CD8-positive, alpha-beta T cell (primary cell): ENCODE measurements at regions of chr1 and their contacts with region 1.

Region 1: DNA sequence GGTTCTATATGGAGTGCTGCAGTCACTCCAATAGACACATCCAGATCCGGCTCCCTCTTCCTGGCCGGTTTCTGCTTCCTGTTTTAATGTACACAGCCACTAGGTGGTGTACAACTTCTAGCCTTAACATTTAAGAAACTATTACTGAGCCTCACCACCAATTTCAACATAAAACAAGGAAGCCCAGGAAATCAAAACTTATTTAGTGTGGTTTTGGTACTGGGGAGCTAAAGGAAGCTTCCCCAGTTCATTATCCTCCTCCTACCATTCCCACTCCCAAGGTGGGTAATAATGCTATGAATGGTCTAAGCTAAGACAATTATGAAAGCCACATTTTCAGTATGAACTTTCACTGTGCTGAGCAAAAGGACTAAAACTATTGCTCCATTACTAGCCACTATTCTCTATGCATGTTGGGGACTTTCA is 25.5 kb upstream of the MTMR11 start:
- DNase-seq: peak in 7 of 9 experiments; percentile 21 to 78 (median 42)
- ATAC-seq: peak; percentile 83
- H3K4me3 ChIP-seq: no peak overlapping the region
- H3K4me3 Mint-ChIP-seq: no peak overlapping the region
- H3K27ac ChIP-seq: no peak overlapping the region
- H3K27ac Mint-ChIP-seq: no peak overlapping the region
- H3K4me1 ChIP-seq: no peaks in the 10 kb centered on the region
- H3K4me1 Mint-ChIP-seq: peaks cover 9% of the 10 kb centered on the region
- H3K27me3 ChIP-seq: no peaks in the 10 kb centered on the region
- H3K27me3 Mint-ChIP-seq: no peaks in the 10 kb centered on the region
- CTCF ChIP-seq: peak; percentile 82

Region 2: DNA sequence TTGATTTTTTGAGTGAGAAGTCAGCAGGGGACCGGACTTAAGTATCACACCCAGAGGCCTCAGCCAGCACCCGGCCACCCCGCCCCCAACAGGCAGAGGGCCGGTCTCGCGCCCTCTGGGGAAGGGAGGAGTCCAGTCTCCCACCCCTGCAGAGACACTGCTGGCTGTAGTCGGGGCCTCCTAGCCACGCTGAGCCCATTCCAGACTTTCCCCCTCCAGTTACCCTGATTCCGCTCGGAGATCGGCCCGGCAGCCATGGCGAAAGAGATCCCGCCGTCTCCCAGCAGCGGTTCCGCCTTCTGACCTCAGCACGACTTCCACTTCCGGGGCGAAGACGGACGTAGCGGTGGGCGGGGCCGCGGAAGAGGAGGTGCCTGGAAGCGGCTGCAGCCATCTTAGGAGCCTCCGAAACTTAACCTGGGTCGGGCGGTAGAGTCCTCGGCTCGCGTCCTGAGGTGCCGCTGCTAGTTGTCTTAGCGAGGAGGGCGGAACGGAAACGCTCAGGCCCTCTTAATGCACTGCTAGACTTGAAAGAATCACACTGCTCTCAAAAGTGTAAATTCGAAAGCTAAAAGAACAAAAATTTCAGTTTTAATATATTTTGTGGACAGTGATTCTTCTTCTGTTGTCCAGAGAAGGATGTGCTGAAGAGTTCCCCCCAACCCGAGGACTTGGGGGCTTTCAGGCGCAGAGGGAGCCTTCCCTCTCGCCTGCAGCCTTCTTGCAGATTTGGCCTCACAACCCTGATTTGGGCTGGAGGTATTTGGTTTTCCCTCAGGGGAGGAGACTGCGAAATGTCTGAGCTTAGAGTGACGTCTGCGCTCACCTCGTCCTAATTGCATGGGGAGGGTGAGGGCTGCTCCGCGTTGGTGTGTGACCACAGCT is 34.4 kb before region 1 on chr1 and contains the start of gene SF3B4:
- CTCF ChIA-PET with region 1: interaction called, 4 read pairs
- POLR2A ChIA-PET with region 1: no interaction called
- intact Hi-C with region 1: loop called in 1 of 2 experiments (anchors 1 kb)
- DNase-seq: peak; percentile 91 to 98 (median 96)
- ATAC-seq: peak; percentile 94
- H3K4me3 ChIP-seq: peak within 1 kb of the TSS; percentile 86 to 97
- H3K4me3 Mint-ChIP-seq: peak within 1 kb of the TSS; percentile 94
- H3K27ac ChIP-seq: peak within 1 kb of the TSS; percentile 71 to 95
- H3K27ac Mint-ChIP-seq: peak within 1 kb of the TSS; percentile 91
- H3K4me1 ChIP-seq: peaks cover 34% of the 10 kb centered on the region
- H3K4me1 Mint-ChIP-seq: peaks cover 45% of the 10 kb centered on the region
- H3K27me3 ChIP-seq: no peaks in the 10 kb centered on the region
- H3K27me3 Mint-ChIP-seq: peaks cover 2% of the 10 kb centered on the region
- CTCF ChIP-seq: no peak
- total RNA-seq, gene SF3B4: 52.0 to 59.1 TPM

Region 3: GRCh38 chr1:149997585-149998262 is 35.6 kb after region 1 on chr1:
- CTCF ChIA-PET with region 1: interaction called, 12 read pairs
- POLR2A ChIA-PET with region 1: no interaction called
- intact Hi-C with region 1: no loop called
- DNase-seq: peak in 1 of 9 experiments; percentile 33
- ATAC-seq: no peak
- H3K4me3 ChIP-seq: no peak overlapping the region
- H3K4me3 Mint-ChIP-seq: no peak overlapping the region
- H3K27ac ChIP-seq: no peak overlapping the region
- H3K27ac Mint-ChIP-seq: no peak overlapping the region
- H3K4me1 ChIP-seq: no peaks in the 10 kb centered on the region
- H3K4me1 Mint-ChIP-seq: peaks cover 17% of the 10 kb centered on the region
- H3K27me3 ChIP-seq: no peaks in the 10 kb centered on the region
- H3K27me3 Mint-ChIP-seq: no peaks in the 10 kb centered on the region
- CTCF ChIP-seq: no peak

Region 4: GRCh38 chr1:150051089-150051373 is 88.9 kb after region 1 on chr1:
- CTCF ChIA-PET with region 1: interaction called, 21 read pairs
- POLR2A ChIA-PET with region 1: interaction called, 3 read pairs
- intact Hi-C with region 1: loop called (anchors 1 kb)
- DNase-seq: no peak
- ATAC-seq: no peak
- H3K4me3 ChIP-seq: no peak overlapping the region
- H3K4me3 Mint-ChIP-seq: no peak overlapping the region
- H3K27ac ChIP-seq: no peak overlapping the region
- H3K27ac Mint-ChIP-seq: no peak overlapping the region
- H3K4me1 ChIP-seq: no peaks in the 10 kb centered on the region
- H3K4me1 Mint-ChIP-seq: peaks cover 3% of the 10 kb centered on the region
- H3K27me3 ChIP-seq: peaks cover 0 to 3% of the 10 kb centered on the region in 2 experiments
- H3K27me3 Mint-ChIP-seq: peaks cover 4% of the 10 kb centered on the region
- CTCF ChIP-seq: no peak

Region 5: GRCh38 chr1:150089846-150090520 is 127.8 kb after region 1 on chr1:
- CTCF ChIA-PET with region 1: no interaction called
- POLR2A ChIA-PET with region 1: no interaction called
- intact Hi-C with region 1: no loop called
- DNase-seq: no peak
- ATAC-seq: no peak
- H3K4me3 ChIP-seq: no peak overlapping the region
- H3K4me3 Mint-ChIP-seq: no peak overlapping the region
- H3K27ac ChIP-seq: no peak overlapping the region
- H3K27ac Mint-ChIP-seq: no peak overlapping the region
- H3K4me1 ChIP-seq: peaks cover 12% of the 10 kb centered on the region
- H3K4me1 Mint-ChIP-seq: peaks cover 19% of the 10 kb centered on the region
- H3K27me3 ChIP-seq: no peaks in the 10 kb centered on the region
- H3K27me3 Mint-ChIP-seq: no peaks in the 10 kb centered on the region
- CTCF ChIP-seq: no peak

Region 6: DNA sequence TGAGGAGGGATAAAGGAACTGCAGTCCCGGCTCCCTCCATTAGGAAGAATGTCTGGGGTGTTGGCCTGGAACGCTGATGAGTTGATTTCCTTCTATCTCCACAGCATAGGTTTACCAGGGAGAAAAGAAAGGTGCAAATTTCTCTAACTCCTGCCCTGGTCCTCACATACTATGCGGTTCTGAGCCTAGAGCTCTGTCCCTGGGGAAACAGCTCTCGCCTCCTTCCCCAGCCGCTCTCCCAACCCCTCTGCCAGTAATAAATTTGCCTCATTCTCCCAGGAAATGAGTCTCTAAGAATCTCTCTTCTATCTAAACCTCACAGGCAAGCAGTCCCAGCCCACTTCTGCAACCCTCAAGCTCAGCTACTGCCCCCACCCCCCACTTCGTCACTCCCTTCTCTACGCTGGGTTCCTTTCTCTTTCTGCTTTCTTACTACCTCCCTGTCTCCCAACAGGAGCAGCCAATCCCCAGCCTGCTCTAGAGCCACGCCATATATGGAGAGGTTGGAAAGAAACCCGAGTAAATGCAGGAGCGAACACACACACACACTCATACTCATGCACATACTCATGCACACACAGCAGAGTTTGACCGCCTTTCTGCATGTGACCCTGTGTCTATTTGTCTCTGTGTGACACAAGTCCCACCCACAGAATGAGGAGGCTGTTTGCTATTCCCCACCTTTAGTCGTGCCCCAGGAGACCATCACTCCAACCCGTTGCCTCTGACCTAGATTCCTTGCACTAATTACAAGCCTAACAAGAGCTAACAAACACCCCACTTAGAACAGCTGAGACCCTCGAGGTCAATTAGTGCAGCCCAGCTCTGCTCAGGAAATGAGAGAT is 200.9 kb after region 1 on chr1:
- CTCF ChIA-PET with region 1: interaction called, 18 read pairs
- POLR2A ChIA-PET with region 1: no interaction called
- intact Hi-C with region 1: loop called (anchors 1 to 5 kb)
- DNase-seq: peak in 1 of 9 experiments; percentile 46
- ATAC-seq: peak; percentile 45
- H3K4me3 ChIP-seq: no peak overlapping the region
- H3K4me3 Mint-ChIP-seq: peak overlapping the region; percentile 6
- H3K27ac ChIP-seq: no peak overlapping the region
- H3K27ac Mint-ChIP-seq: peak overlapping the region; percentile 10
- H3K4me1 ChIP-seq: peaks cover 46% of the 10 kb centered on the region
- H3K4me1 Mint-ChIP-seq: peaks cover 43% of the 10 kb centered on the region
- H3K27me3 ChIP-seq: no peaks in the 10 kb centered on the region
- H3K27me3 Mint-ChIP-seq: no peaks in the 10 kb centered on the region
- CTCF ChIP-seq: no peak

Region 7: GRCh38 chr1:150186789-150187559 is 224.8 kb after region 1 on chr1:
- CTCF ChIA-PET with region 1: interaction called, 33 read pairs
- POLR2A ChIA-PET with region 1: no interaction called
- intact Hi-C with region 1: loop called (anchors 1 kb)
- DNase-seq: peak in 5 of 9 experiments; percentile 5 to 85 (median 12)
- ATAC-seq: peak; percentile 78
- H3K4me3 ChIP-seq: no peak overlapping the region
- H3K4me3 Mint-ChIP-seq: peak overlapping the region; percentile 32
- H3K27ac ChIP-seq: peak overlapping the region in 1 of 2 experiments; percentile 33
- H3K27ac Mint-ChIP-seq: no peak overlapping the region
- H3K4me1 ChIP-seq: peaks cover 5% of the 10 kb centered on the region
- H3K4me1 Mint-ChIP-seq: peaks cover 7% of the 10 kb centered on the region
- H3K27me3 ChIP-seq: no peaks in the 10 kb centered on the region
- H3K27me3 Mint-ChIP-seq: no peaks in the 10 kb centered on the region
- CTCF ChIP-seq: peak; percentile 91

Region 8: GRCh38 chr1:150332651-150333290 is 370.6 kb after region 1 on chr1:
- CTCF ChIA-PET with region 1: no interaction called
- POLR2A ChIA-PET with region 1: no interaction called
- intact Hi-C with region 1: no loop called
- DNase-seq: no peak
- ATAC-seq: no peak
- H3K4me3 ChIP-seq: no peak overlapping the region
- H3K4me3 Mint-ChIP-seq: no peak overlapping the region
- H3K27ac ChIP-seq: no peak overlapping the region
- H3K27ac Mint-ChIP-seq: no peak overlapping the region
- H3K4me1 ChIP-seq: no peaks in the 10 kb centered on the region
- H3K4me1 Mint-ChIP-seq: peaks cover 7% of the 10 kb centered on the region
- H3K27me3 ChIP-seq: no peaks in the 10 kb centered on the region
- H3K27me3 Mint-ChIP-seq: no peaks in the 10 kb centered on the region
- CTCF ChIP-seq: no peak